ENCODE measurements at regions of chr9 and their contacts with region 1.

Region 1: GRCh38 chr9:4984621-4985385 is at the start of gene JAK2:
- DNase-seq: peak; percentile 65
- H3K4me3 ChIP-seq: peak within 1 kb of the TSS; percentile 87
- H3K27me3 ChIP-seq: no peaks in the 10 kb centered on the region
- CTCF ChIP-seq: peak; percentile 65
- polyA plus RNA-seq, gene JAK2: 2.0 and 3.8 TPM in 2 replicates

Region 2: GRCh38 chr9:4750023-4750673 is 234.7 kb before region 1 on chr9:
- CTCF ChIA-PET with region 1: interaction called, 20 read pairs
- POLR2A ChIA-PET with region 1: no interaction called
- DNase-seq: no peak
- H3K4me3 ChIP-seq: no peak overlapping the region
- H3K27me3 ChIP-seq: no peaks in the 10 kb centered on the region
- CTCF ChIP-seq: peak; percentile 64

Region 3: DNA sequence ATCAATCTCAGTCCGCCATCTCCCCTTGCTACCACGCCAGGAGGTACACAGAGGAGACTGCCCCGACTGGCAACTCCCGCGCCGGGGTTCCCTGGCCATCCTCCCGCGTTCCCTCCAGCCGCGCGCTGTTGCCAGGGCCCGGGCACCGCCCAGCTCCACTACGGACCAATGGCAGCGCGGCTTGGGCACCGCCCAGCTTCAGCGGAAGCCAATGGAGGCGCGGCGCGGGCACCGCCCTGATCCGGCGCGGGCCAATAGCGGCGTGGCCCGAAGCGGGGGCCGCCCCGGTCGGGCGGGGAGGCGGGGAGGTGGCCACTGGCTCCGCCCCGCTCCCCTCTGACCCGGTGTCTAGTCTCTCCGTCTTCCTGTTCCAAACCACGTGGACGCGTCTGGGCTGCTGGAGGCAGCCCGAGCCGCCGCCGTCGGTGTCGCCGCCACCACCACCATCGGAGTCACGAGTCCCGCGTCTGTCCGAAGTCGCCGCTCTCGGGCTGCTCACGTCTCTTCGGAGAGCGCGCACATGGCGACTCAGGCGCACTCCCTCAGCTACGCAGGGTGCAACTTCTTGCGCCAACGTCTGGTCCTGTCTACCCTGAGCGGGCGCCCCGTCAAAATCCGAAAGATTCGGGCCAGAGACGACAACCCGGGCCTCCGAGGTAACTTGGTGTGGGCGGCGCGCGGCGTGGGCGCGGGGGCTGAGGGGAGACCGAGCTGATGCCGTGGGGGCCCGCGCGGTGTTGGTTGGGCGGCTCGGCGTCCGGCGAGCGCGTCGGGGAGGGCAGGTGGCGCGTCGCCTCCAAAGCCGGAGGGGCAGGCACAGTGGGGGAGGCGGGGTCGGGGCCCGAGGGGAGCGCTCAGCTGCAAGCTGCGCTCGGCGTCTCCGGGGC is 192.0 kb before region 1 on chr9 and contains the start of gene RCL1:
- CTCF ChIA-PET with region 1: interaction called, 10 read pairs
- POLR2A ChIA-PET with region 1: no interaction called
- DNase-seq: peak; percentile 62
- H3K4me3 ChIP-seq: peak within 1 kb of the TSS; percentile 97
- H3K27me3 ChIP-seq: 0 out of 2 replicates have a peak, but pooled peaks cover 3% of the 10 kb centered on the region
- CTCF ChIP-seq: no peak
- polyA plus RNA-seq, gene RCL1: 3.7 and 5.1 TPM in 2 replicates

Region 4: GRCh38 chr9:4997196-4997595 is 12.4 kb after region 1 on chr9:
- CTCF ChIA-PET with region 1: interaction called, 16 read pairs
- POLR2A ChIA-PET with region 1: no interaction called
- DNase-seq: no peak
- H3K4me3 ChIP-seq: no peak overlapping the region
- H3K27me3 ChIP-seq: no peaks in the 10 kb centered on the region
- CTCF ChIP-seq: no peak

Measured in BJ (cell line).